ENCODE measurements at regions of chr7 and their contacts with region 1.

Region 1: GRCh38 chr7:87876040-87876868 is at the starts of genes DBF4 and SLC25A40:
- DNase-seq: peak; percentile 94
- H3K4me3 Mint-ChIP-seq: peak within 1 kb of the TSS; percentile 91
- H3K27ac Mint-ChIP-seq: peak within 1 kb of the TSS; percentile 91
- H3K4me1 Mint-ChIP-seq: peaks cover 41% of the 10 kb centered on the region
- H3K27me3 Mint-ChIP-seq: no peaks in the 10 kb centered on the region
- total RNA-seq, gene DBF4: 70.1 to 70.6 TPM
- total RNA-seq, gene SLC25A40: 32.7 to 38.3 TPM

Region 2: DNA sequence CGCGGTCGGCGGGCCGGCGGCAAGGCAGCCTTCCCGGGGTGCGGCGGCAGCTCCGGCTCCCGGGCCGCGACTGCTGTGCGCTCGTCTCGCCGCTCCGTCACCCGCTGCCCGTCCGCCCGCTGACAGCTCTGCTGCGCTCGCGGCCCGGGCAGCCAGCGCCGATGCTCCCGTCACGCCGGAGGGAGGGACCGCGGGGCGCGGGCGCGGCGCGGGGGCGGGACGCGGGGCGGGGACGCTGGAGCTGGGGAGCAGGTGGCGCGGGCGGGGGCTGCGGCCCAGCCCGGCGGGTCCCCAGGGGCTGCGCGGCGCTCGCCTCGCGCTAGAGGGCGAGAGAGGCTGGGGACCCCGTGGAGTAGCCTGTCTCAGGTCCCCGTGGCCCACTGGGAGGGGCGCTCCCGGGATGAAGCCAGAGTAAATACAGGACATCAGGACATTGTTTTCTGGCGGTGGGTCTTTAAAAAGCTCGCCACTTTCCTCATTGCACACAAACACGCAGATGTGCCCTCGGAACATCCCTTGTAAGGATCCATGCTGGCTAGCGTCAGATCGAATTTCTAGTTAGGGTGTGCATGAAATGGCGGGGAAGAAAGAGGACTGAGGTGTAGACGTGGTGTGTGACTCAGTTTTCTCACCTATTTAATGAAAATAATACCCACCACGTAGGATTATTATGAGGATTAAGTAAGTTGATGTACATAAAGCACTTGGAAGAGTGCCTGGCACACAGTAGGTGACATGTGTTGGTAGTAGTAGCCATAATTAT is 816.5 kb before region 1 on chr7 and contains the start of gene ELAPOR2:
- CTCF ChIA-PET with region 1: no interaction called
- intact Hi-C with region 1: loop called (anchors 10 kb)
- DNase-seq: peak; percentile 79
- H3K4me3 Mint-ChIP-seq: peak within 1 kb of the TSS; percentile 71
- H3K27ac Mint-ChIP-seq: no peak within 1 kb of the TSS
- H3K4me1 Mint-ChIP-seq: peaks cover 12% of the 10 kb centered on the region
- H3K27me3 Mint-ChIP-seq: peaks cover 5% of the 10 kb centered on the region
- total RNA-seq, gene ELAPOR2: 3.2 to 3.9 TPM

Region 3: DNA sequence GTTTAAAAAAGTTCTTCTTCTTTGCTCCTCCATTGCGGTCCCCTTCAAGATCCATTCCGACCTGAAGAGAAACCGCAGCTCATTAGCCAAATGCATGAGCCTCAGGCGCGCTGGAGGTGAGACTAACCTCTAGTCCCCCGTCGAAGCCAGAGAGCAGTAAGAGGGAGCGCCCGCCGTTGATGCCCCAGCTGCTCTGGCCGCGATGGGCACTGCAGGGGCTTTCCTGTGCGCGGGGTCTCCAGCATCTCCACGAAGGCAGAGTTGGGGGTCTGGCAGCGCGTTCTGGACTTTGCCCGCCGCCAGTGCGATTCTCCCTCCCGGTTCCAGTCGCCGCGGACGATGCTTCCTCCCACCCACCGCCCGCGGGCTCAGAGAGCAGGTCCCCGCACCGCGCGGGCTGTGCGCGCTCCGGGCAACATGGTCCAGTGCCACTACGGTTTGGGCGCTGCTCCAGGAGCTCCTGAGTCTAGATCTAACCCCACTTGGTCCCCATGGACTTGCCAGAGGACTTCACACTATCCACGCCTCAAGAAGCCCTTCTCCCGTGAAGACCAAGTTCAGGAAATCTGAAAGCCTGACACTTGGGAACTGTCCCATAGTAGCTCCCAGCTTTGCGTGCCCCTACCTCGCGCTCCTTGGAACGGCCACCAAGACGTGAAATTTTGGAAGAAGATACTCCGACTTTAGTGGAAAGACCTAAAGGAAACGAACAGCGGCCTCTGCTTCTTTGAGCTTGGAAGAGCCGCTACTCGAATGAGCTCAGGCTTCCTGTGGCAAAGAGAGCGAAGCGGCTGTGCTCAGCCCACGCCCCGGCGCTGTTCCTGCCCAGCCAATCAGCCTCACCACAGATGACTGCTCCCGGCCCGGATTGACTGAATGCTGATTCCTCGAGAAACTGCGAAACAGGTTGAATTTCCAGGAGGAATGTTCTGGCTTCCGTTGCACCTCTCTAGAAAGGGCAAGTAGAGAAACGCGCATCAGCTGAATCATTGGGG is 275.8 kb before region 1 on chr7 and contains the start of gene ABCB1:
- CTCF ChIA-PET with region 1: no interaction called
- intact Hi-C with region 1: loop called (anchors 2 kb)
- DNase-seq: peak; percentile 73
- H3K4me3 Mint-ChIP-seq: peak within 1 kb of the TSS; percentile 84
- H3K27ac Mint-ChIP-seq: peak within 1 kb of the TSS; percentile 8
- H3K4me1 Mint-ChIP-seq: peaks cover 20% of the 10 kb centered on the region
- H3K27me3 Mint-ChIP-seq: peaks cover 5% of the 10 kb centered on the region
- total RNA-seq, gene ABCB1: 2.3 to 3.5 TPM

Region 4: DNA sequence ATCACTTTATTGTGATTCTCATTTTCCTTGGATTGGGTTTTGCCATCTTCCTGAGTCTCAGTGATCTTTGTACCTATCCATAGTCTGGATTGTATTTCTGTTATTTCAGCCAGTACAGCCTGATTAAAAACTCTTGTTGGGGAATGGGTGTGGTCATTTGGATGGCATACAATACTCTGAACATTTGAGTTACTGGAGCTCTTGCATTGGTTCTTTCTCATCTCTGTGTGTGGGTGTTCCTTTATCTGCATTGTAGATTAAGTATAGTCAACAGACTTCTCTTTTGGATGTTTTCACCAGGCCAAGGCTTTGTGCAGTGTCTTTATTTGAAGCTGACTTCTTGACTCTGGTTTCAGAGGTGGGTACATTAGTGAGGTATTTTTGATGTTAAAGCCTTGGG is 205.9 kb before region 1 on chr7:
- CTCF ChIA-PET with region 1: no interaction called
- intact Hi-C with region 1: no loop called
- DNase-seq: no peak
- H3K4me3 Mint-ChIP-seq: no peak overlapping the region
- H3K27ac Mint-ChIP-seq: no peak overlapping the region
- H3K4me1 Mint-ChIP-seq: no peaks in the 10 kb centered on the region
- H3K27me3 Mint-ChIP-seq: peaks cover 11% of the 10 kb centered on the region

Region 5: DNA sequence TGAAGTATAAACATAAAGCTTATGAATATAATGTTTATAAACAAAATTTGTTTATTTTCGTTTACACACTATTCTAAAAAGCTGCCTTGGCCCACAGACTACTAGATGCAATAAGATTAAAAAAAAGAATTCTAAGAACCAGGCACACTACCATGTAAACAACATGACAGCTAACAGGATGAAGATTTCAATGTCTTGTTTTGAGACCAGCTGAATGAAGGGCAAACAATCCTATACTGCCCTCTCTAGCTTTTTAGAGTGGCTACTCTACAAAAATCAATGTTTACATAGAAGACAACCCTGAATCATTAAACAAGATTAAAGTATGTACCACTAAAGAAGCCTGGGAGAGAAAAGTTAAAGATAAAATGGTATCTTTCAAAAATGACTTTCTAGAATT is 38.7 kb before region 1 on chr7:
- CTCF ChIA-PET with region 1: no interaction called
- intact Hi-C with region 1: no loop called
- DNase-seq: no peak
- H3K4me3 Mint-ChIP-seq: no peak overlapping the region
- H3K27ac Mint-ChIP-seq: no peak overlapping the region
- H3K4me1 Mint-ChIP-seq: no peaks in the 10 kb centered on the region
- H3K27me3 Mint-ChIP-seq: no peaks in the 10 kb centered on the region

Region 6: DNA sequence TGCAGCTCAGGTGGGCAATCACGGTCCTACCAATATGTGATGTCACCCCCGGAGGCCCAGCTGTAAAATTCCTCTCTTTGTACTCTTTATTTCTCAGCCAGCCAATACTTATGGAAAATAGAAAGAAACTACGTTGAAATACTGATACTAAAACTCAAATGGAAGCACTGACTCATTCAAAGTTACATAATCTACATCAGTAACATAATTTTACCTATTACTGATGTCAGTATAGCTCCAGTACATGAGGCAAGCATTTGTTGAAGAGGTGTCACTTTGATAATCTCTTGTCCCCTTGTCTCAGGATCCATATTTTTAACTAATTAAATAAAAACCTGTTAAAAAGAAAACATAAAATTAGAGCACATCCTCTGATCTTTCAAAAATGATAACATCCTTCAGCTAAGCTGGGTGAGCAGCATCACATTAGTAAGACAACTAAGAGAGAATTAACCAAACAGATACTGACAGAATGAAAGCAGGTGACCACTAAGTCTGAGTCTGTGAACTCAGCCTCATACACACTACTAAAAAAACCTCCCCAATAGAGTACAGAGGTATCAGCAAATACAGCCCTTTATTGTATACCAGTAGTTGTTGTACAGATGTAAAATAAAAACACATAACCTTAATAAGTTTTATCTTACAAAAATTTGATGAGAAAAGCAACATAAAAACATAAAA is 17.7 kb before region 1 on chr7:
- CTCF ChIA-PET with region 1: no interaction called
- intact Hi-C with region 1: loop called (anchors 1 kb)
- DNase-seq: no peak
- H3K4me3 Mint-ChIP-seq: no peak overlapping the region
- H3K27ac Mint-ChIP-seq: peak overlapping the region; percentile 78
- H3K4me1 Mint-ChIP-seq: peaks cover 19% of the 10 kb centered on the region
- H3K27me3 Mint-ChIP-seq: no peaks in the 10 kb centered on the region

Region 7: DNA sequence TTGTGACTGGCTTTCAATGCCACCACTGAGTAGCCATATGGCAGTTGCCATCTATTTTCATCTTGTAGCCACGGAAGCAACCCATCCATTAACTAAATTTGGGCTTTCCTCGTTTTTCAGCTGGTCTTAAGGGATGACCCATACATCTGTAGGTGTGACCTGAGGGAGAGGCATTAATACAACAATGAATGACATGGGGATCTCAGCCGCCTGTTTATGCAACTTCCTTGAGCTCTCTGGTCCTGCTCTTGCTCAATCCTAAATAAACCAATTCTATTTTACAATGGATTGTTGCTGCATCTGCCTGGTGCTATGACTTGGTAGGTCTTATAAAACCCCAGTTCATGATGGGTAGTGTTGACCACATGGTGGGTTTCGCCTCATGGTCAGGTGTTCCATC is 35.9 kb after region 1 on chr7:
- CTCF ChIA-PET with region 1: no interaction called
- intact Hi-C with region 1: no loop called
- DNase-seq: no peak
- H3K4me3 Mint-ChIP-seq: no peak overlapping the region
- H3K27ac Mint-ChIP-seq: no peak overlapping the region
- H3K4me1 Mint-ChIP-seq: peaks cover 4% of the 10 kb centered on the region
- H3K27me3 Mint-ChIP-seq: no peaks in the 10 kb centered on the region

Region 8: GRCh38 chr7:88111136-88111743 is 235.0 kb after region 1 on chr7:
- CTCF ChIA-PET with region 1: no interaction called
- intact Hi-C with region 1: loop called (anchors 5 kb)
- DNase-seq: no peak
- H3K4me3 Mint-ChIP-seq: no peak overlapping the region
- H3K27ac Mint-ChIP-seq: no peak overlapping the region
- H3K4me1 Mint-ChIP-seq: peaks cover 4% of the 10 kb centered on the region
- H3K27me3 Mint-ChIP-seq: no peaks in the 10 kb centered on the region

Region 9: GRCh38 chr7:88184848-88185304 is 308.6 kb after region 1 on chr7:
- CTCF ChIA-PET with region 1: no interaction called
- intact Hi-C with region 1: no loop called
- DNase-seq: no peak
- H3K4me3 Mint-ChIP-seq: no peak overlapping the region
- H3K27ac Mint-ChIP-seq: no peak overlapping the region
- H3K4me1 Mint-ChIP-seq: no peaks in the 10 kb centered on the region
- H3K27me3 Mint-ChIP-seq: no peaks in the 10 kb centered on the region

Measured in activated naive CD4-positive, alpha-beta T cell treated with anti-CD3 and anti-CD28 coated beads for 36 hours (primary cell).